BJ (cell line): ENCODE measurements at regions of chr5 and their contacts with region 1.

Region 1: DNA sequence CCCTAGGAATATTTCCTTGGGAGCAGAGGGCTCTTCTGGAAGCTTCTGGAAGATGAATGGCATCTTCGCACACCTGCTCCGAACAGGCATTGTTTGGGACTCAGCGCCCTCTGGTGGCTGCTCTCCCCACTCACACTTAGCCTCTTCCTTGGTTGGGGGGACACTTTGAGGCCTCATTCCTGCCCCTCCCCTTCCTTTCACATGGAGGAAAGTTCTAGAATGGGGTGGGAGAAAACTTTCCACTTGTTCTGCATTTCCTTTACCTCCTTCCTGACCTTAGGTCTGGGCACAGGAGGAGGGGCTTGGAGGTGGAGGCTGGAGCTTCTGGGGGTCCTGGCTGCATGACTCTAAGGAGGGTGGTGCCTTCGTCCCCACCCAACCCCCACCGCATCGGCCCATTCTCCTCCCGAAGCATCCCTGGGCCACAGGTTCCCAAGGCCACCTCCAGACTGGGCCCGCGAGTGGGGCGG is 19.3 kb upstream of the SMIM32 start:
- DNase-seq: no peak
- H3K4me3 ChIP-seq: no peak overlapping the region
- H3K27me3 ChIP-seq: peaks cover 5% of the 10 kb centered on the region
- CTCF ChIP-seq: peak; percentile 88

Region 2: GRCh38 chr5:135880278-135880677 is 332.0 kb before region 1 on chr5:
- CTCF ChIA-PET with region 1: interaction called, 25 read pairs
- POLR2A ChIA-PET with region 1: no interaction called
- DNase-seq: no peak
- H3K4me3 ChIP-seq: no peak overlapping the region
- H3K27me3 ChIP-seq: peaks cover 3% of the 10 kb centered on the region; the same call in 1 of the 2 replicates
- CTCF ChIP-seq: peak; percentile 30; the same call in 1 of the 2 replicates

Region 3: GRCh38 chr5:136133222-136133965 is 78.9 kb before region 1 on chr5:
- CTCF ChIA-PET with region 1: no interaction called
- POLR2A ChIA-PET with region 1: no interaction called
- DNase-seq: no peak
- H3K4me3 ChIP-seq: peak overlapping the region; percentile 94
- H3K27me3 ChIP-seq: no peaks in the 10 kb centered on the region
- CTCF ChIP-seq: no peak